GM10248 (cell line): ENCODE measurements at regions of chr1 and their contacts with region 1.

Region 1: GRCh38 chr1:209059981-209060380 is 523.5 kb upstream of the CAMK1G start:
- DNase-seq: no peak
- CTCF ChIP-seq: no peak

Region 2: GRCh38 chr1:209029737-209030136 is 30.2 kb before region 1 on chr1:
- CTCF ChIA-PET with region 1: no interaction called
- POLR2A ChIA-PET with region 1: no interaction called
- DNase-seq: no peak
- CTCF ChIP-seq: no peak

Region 3: GRCh38 chr1:209048941-209049669 is 10.9 kb before region 1 on chr1:
- CTCF ChIA-PET with region 1: interaction called, 13 read pairs
- POLR2A ChIA-PET with region 1: no interaction called
- DNase-seq: no peak
- CTCF ChIP-seq: no peak

Region 4: GRCh38 chr1:209113521-209113920 is 53.5 kb after region 1 on chr1:
- CTCF ChIA-PET with region 1: no interaction called
- POLR2A ChIA-PET with region 1: no interaction called
- DNase-seq: no peak
- CTCF ChIP-seq: no peak